PC-9 (cell line): ENCODE measurements at regions of chr19 and their contacts with region 1.

Region 1: GRCh38 chr19:48492925-48493717 is 18.5 kb downstream of the LMTK3 start:
- DNase-seq: peak; percentile 95 to 99
- H3K4me3 ChIP-seq: peak overlapping the region; percentile 77; the same call in 1 of the 2 replicates
- H3K27ac ChIP-seq: peak overlapping the region; percentile 62
- H3K4me1 ChIP-seq: peaks cover 39% of the 10 kb centered on the region
- H3K27me3 ChIP-seq: no peaks in the 10 kb centered on the region
- CTCF ChIP-seq: no peak

Region 2: GRCh38 chr19:48271531-48272151 is 221.5 kb before region 1 on chr19:
- CTCF ChIA-PET with region 1: interaction called, 3 read pairs
- POLR2A ChIA-PET with region 1: interaction called, 7 read pairs
- intact Hi-C with region 1: loop called (anchors 2 kb)
- DNase-seq: peak; percentile 66 to 75
- H3K4me3 ChIP-seq: peak overlapping the region; percentile 79
- H3K27ac ChIP-seq: peak overlapping the region; percentile 99
- H3K4me1 ChIP-seq: peaks cover 25% of the 10 kb centered on the region
- H3K27me3 ChIP-seq: no peaks in the 10 kb centered on the region
- CTCF ChIP-seq: no peak

Region 3: GRCh38 chr19:48333467-48334384 is 159.4 kb before region 1 on chr19:
- CTCF ChIA-PET with region 1: interaction called, 17 read pairs
- POLR2A ChIA-PET with region 1: no interaction called
- intact Hi-C with region 1: no loop called
- DNase-seq: peak; percentile 87 to 91
- H3K4me3 ChIP-seq: peak overlapping the region; percentile 55
- H3K27ac ChIP-seq: peak overlapping the region; percentile 68
- H3K4me1 ChIP-seq: peaks cover 16% of the 10 kb centered on the region
- H3K27me3 ChIP-seq: no peaks in the 10 kb centered on the region
- CTCF ChIP-seq: peak; percentile 87

Region 4: DNA sequence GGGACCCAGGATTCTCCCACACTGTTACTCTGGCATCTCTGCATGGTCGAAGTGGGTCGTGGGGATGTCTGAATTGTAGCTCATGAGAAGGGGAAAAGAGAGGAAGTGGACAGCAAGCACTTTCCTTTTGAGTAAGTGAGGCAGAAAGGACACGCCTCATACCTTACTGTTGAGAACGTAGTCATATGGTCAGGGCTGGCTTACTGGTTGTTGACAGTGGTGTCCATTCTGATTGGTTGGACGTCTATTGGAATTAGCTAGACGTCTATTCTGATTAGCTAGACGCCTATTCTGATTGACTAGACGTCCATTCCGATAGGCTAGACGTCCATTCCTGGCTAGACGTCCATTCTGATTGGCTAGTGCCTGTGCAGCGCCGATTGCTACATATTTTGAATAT is 87.3 kb before region 1 on chr19:
- CTCF ChIA-PET with region 1: no interaction called
- POLR2A ChIA-PET with region 1: no interaction called
- intact Hi-C with region 1: no loop called
- DNase-seq: peak in 1 of 2 experiments; percentile 51
- H3K4me3 ChIP-seq: no peak overlapping the region
- H3K27ac ChIP-seq: no peak overlapping the region
- H3K4me1 ChIP-seq: peaks cover 9% of the 10 kb centered on the region
- H3K27me3 ChIP-seq: no peaks in the 10 kb centered on the region
- CTCF ChIP-seq: no peak

Region 5: DNA sequence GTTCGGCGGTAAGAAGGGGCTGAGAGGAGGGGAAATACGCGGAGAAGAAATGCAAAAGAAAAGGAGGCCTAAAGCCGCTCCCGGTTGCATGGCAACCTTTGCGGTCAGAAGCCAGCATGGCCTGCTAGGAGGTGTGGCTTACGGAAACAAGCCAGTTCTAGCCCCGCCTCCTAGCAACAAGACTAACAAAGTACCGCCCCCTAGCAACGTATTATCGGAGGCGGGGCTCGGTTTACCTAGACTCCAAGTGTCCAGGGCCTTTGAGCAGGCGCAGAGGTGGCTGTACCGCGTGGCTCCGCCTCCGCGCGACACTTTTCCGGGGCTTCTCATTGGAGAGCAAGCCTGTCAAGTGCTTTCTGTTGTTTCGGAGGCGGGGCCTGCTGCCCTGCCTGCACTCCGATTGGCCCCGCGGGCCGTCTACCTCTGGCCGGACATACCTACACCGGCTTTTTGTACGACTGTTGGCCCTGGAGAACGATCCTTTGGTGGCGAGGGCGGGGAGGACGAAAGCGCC is 24.3 kb before region 1 on chr19:
- CTCF ChIA-PET with region 1: no interaction called
- POLR2A ChIA-PET with region 1: no interaction called
- intact Hi-C with region 1: loop called (anchors 2 kb)
- DNase-seq: peak; percentile 100
- H3K4me3 ChIP-seq: peak overlapping the region; percentile 93
- H3K27ac ChIP-seq: peak overlapping the region; percentile 82; the same call in 1 of the 2 replicates
- H3K4me1 ChIP-seq: peaks cover 11% of the 10 kb centered on the region
- H3K27me3 ChIP-seq: no peaks in the 10 kb centered on the region
- CTCF ChIP-seq: no peak

Region 6: DNA sequence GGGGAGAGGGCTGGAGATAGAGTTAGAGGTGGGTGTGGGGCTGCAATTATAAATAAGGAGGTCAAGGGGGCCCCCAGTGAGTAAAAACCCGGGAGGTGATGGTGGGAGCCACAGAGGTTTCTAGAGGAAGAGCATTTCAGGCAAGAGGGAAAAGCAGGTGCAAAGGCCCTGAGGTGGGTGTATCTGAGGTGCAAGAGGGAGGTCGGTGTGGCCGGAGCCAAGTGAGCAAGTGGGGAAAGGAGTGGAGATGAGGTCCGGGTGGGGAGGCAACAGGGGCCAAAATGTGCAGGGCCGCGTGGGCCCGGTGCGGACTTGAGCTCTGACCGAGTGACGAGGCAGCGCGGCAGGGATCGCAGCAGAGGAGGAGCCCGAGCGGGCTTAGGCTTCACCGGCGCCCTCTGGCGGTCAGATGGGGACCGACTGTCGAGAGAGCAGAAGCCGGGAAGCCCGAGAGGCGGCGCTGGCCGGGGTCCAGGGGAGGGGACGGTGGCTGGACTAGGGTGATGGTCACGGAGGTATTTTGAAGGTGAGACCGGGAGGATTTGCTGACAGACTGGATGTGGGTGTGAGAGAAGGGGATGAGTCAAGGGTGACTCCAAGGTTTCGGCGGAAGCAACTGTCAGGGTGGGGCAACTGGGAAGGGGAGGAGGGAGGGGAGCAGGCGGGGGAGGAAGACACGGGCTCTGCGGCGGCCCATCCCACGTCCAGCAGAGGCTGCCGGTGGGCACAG is 95.7 kb after region 1 on chr19:
- CTCF ChIA-PET with region 1: interaction called, 17 read pairs
- POLR2A ChIA-PET with region 1: interaction called, 7 read pairs
- intact Hi-C with region 1: loop called (anchors 1 kb)
- DNase-seq: peak; percentile 93 to 96
- H3K4me3 ChIP-seq: peak overlapping the region; percentile 43; the same call in 1 of the 2 replicates
- H3K27ac ChIP-seq: peak overlapping the region; percentile 73
- H3K4me1 ChIP-seq: peaks cover 14% of the 10 kb centered on the region
- H3K27me3 ChIP-seq: no peaks in the 10 kb centered on the region
- CTCF ChIP-seq: peak; percentile 94

Region 7: DNA sequence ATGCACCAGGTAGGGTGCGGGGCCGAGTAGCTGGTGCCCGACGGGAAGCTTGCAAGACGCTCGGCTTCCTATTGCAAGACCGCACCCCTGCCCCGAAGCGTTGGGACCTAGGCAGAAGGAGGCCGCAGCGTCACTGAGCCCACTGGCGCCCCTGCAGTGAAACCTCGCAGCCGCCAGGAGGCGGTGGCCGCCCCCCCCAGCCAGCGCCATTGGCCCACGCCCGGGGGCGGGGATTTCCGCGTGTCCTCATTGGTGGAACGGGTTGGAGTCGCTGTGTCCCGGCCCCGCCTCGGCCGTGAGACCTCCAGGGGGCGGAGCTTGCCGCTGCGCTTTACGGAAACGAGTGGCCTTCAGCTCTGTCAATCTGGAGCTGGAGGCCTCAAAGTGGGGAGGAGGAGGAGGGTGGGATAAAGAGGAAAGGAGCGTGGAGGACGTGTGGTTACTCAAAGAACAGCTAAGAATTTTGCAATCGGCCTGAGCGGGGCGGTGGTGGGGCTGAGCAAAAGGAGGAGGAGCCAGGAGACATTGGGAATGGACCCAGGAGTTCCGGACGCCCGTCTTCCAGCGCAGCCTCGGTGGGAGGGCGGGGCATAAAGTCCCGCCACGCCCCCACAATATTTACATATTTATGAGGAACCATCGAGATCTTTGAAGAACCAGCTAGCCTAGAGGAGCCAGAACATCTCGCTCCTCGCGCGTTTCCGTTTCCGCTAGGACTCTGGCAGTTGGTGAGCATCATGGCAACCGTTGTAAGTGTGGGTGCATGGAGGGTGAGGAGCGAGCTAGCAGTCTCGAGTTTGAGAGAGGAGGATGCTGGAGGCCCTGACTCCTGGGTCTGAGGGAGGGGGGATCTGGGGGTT is 500.3 kb after region 1 on chr19 and contains the starts of genes GYS1 and RUVBL2:
- CTCF ChIA-PET with region 1: interaction called, 5 read pairs
- POLR2A ChIA-PET with region 1: interaction called, 12 read pairs
- intact Hi-C with region 1: no loop called
- DNase-seq: peak; percentile 99
- H3K4me3 ChIP-seq: peak within 1 kb of the TSS; percentile 97
- H3K27ac ChIP-seq: peak within 1 kb of the TSS; percentile 41; the same call in 1 of the 2 replicates
- H3K4me1 ChIP-seq: peaks cover 16% of the 10 kb centered on the region
- H3K27me3 ChIP-seq: no peaks in the 10 kb centered on the region
- CTCF ChIP-seq: peak; percentile 91
- total RNA-seq, gene GYS1: 47.5 and 54.2 TPM in 2 replicates
- total RNA-seq, gene RUVBL2: 175 and 179 TPM in 2 replicates